Activated CD8-positive, alpha-beta T cell treated with anti-CD3 and anti-CD28 coated beads for 36 hours (primary cell): ENCODE measurements at regions of chr11 and their contacts with region 1.

Region 1: GRCh38 chr11:14974515-14975251 is 2.5 kb upstream of the CALCA start:
- DNase-seq: peak; percentile 85
- ATAC-seq: peak; percentile 70
- H3K4me3 Mint-ChIP-seq: peak overlapping the region; percentile 67
- H3K27ac Mint-ChIP-seq: no peak overlapping the region
- H3K4me1 Mint-ChIP-seq: peaks cover 34% of the 10 kb centered on the region
- H3K27me3 Mint-ChIP-seq: peaks cover 62% of the 10 kb centered on the region
- CTCF ChIP-seq: peak; percentile 80

Region 2: DNA sequence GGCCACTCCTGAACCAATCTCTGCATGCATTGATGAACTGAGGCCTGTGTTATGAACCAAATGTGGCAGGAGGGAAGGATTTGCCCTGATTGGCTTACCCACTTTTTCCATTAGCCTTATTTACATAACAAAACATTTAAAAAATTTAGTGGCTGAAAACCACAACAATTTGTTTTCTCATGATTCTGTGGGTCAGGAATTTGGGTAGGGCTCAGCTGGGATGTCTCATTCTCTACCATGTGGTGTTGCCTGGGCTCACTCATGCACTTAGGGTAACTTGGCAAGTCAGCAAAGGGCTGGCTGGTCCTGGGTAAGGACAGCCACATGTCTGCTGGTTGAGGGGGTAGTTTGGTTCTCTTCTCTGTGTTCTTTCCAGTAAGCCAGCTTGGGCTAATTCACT is 47.5 kb before region 1 on chr11:
- CTCF ChIA-PET with region 1: interaction called, 20 read pairs
- POLR2A ChIA-PET with region 1: no interaction called
- intact Hi-C with region 1: no loop called
- DNase-seq: no peak
- ATAC-seq: no peak
- H3K4me3 Mint-ChIP-seq: no peak overlapping the region
- H3K27ac Mint-ChIP-seq: no peak overlapping the region
- H3K4me1 Mint-ChIP-seq: no peaks in the 10 kb centered on the region
- H3K27me3 Mint-ChIP-seq: no peaks in the 10 kb centered on the region
- CTCF ChIP-seq: no peak

Region 3: DNA sequence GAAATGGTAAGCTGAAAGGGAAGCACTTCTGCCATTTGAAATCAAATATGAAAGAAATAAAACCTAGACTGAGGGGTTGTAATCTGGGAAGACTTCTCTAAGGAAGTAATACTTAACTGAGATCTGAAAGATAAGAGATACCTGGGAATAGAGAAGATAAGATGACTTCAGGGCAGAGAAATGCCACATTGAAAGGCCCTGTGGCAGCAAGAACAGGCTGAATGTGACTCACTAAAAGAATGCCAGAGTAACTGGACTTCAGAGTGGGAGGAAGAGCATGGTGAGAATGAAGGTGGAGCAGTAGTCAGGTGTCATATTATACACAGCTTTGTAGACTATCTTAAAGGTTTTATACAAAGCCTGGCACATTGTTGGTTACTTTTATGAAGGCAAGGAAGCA is 20.1 kb before region 1 on chr11:
- CTCF ChIA-PET with region 1: interaction called, 18 read pairs
- POLR2A ChIA-PET with region 1: interaction called, 6 read pairs
- intact Hi-C with region 1: no loop called
- DNase-seq: no peak
- ATAC-seq: no peak
- H3K4me3 Mint-ChIP-seq: no peak overlapping the region
- H3K27ac Mint-ChIP-seq: no peak overlapping the region
- H3K4me1 Mint-ChIP-seq: no peaks in the 10 kb centered on the region
- H3K27me3 Mint-ChIP-seq: no peaks in the 10 kb centered on the region
- CTCF ChIP-seq: no peak

Region 4: GRCh38 chr11:15011776-15012175 is 37.1 kb after region 1 on chr11:
- CTCF ChIA-PET with region 1: interaction called, 114 read pairs
- POLR2A ChIA-PET with region 1: no interaction called
- intact Hi-C with region 1: loop called (anchors 5 kb)
- DNase-seq: no peak
- ATAC-seq: no peak
- H3K4me3 Mint-ChIP-seq: no peak overlapping the region
- H3K27ac Mint-ChIP-seq: no peak overlapping the region
- H3K4me1 Mint-ChIP-seq: no peaks in the 10 kb centered on the region
- H3K27me3 Mint-ChIP-seq: peaks cover 32% of the 10 kb centered on the region
- CTCF ChIP-seq: no peak